ENCODE measurements at regions of chr17 and their contacts with region 1.

Region 1: DNA sequence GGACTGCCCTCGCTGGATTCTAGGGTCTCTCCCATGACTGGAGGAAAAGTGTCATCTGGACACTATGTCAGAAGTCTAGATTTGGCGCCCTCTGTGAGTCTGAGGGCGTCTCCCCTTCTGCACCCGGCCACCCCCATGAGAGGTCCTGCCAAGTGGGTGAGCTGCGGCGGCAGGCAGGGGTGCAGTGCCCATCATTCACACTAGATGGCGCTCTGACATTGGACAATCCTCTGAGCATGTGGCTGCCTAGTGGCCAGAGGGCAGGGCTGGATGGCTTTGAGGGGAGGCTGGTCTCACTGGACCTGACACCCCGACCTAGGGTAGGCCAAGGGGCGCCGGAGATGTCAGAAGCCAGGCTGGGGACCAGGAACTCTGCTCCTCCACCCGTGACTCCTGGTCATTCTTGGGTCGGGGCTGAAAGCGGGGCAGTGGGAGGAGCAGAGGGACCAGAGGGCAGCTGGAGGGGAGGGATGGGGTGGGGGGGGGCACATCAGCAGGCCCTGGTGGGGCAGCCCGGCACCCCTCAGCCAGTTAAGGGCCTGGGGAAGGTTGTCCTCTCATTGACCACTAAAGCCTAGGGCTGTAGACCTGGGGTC is 28.0 kb downstream of the MRM1 start:
- DNase-seq: peak; percentile 78
- H3K4me3 Mint-ChIP-seq: no peak overlapping the region
- H3K27ac Mint-ChIP-seq: no peak overlapping the region
- H3K4me1 Mint-ChIP-seq: no peaks in the 10 kb centered on the region
- H3K27me3 Mint-ChIP-seq: peaks cover 3% of the 10 kb centered on the region

Region 2: DNA sequence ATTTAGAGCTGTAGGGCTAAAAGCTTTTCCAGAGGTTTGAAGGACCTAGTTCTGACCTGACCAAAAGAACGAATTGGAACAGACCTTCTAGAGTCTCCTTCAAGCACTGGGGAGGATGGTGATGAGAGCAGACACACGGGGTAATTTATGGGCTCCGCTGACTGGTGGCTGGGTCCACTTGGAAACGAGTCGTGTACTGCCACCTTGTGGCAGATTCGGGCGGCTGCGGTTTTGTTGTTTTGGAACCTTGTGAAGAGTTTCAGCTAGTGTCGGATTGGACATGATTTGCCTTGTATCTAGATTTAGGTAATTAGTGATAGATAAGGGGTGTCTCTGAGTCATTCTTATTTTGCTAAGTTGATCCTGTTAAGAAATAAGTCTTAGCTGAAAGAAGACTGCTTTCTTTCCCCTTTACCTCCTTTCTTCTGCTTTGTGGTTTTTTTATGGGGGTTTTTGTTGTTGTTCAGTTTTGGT is 418.3 kb after region 1 on chr17:
- CTCF ChIA-PET with region 1: interaction called, 11 read pairs
- POLR2A ChIA-PET with region 1: no interaction called
- DNase-seq: peak; percentile 85
- H3K4me3 Mint-ChIP-seq: no peak overlapping the region
- H3K27ac Mint-ChIP-seq: no peak overlapping the region
- H3K4me1 Mint-ChIP-seq: peaks cover 12% of the 10 kb centered on the region
- H3K27me3 Mint-ChIP-seq: no peaks in the 10 kb centered on the region